CD14-positive monocyte (primary cell): ENCODE measurements at regions of chr11 and their contacts with region 1.

Region 1: GRCh38 chr11:5808500-5809121 is at the start of gene OR52N2:
- DNase-seq: peak; percentile 71 to 83 (median 80)
- H3K4me3 ChIP-seq: peak within 1 kb of the TSS; percentile 73 to 98 (median 87)
- H3K4me3 Mint-ChIP-seq: peak within 1 kb of the TSS; percentile 97 to 98
- H3K27ac ChIP-seq: peak within 1 kb of the TSS; percentile 2 to 77
- H3K27ac Mint-ChIP-seq: peak within 1 kb of the TSS; percentile 30 to 88 (median 59)
- H3K4me1 ChIP-seq: peaks cover 7 to 15% of the 10 kb centered on the region in 2 donors
- H3K4me1 Mint-ChIP-seq: peaks cover 16% of the 10 kb centered on the region
- H3K27me3 ChIP-seq: no peaks in the 10 kb centered on the region
- H3K27me3 Mint-ChIP-seq: peaks cover 0 to 5% (median 2%) of the 10 kb centered on the region in 3 donors
- CTCF ChIP-seq: peak; percentile 87
- polyA plus RNA-seq, gene OR52N2: not detected

Region 2: DNA sequence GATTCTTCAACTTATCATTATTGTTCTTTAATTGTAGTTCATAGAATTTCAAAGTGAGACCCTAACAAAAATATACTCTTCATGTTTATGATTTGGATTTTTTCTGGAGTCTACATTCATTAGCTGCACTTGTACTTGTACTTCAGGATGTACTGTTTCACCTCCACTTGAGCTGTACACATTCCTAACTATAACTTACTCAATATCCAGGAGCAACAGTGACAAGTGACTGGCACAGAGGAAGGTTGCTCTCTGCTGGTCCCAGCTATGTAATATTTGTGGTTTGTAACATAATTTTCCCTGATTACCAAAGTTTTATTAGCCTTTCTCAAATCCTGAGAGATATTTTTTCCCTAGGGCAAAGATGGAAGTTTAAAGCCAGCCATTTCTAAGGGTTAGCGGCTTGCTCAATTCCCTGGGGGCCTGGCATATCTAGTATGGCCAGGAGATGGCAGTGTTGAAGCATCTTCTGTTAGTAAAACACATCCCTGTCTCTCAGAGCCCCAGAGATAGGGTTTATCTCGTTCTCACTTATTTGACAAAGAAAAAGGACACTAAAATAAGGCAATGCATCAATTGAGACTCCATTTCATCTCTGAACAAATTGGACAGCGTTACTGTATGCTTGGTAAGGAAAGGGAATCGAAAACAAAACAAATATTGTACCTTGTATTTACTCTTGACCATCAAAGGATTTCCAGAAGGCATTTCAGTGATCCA is 684.6 kb before region 1 on chr11:
- intact Hi-C with region 1: loop called in 1 of 2 experiments (anchors 10 kb)
- DNase-seq: peak; percentile 6 to 33 (median 16)
- H3K4me3 ChIP-seq: no peak overlapping the region
- H3K4me3 Mint-ChIP-seq: no peak overlapping the region
- H3K27ac ChIP-seq: no peak overlapping the region
- H3K27ac Mint-ChIP-seq: no peak overlapping the region
- H3K4me1 ChIP-seq: no peaks in the 10 kb centered on the region
- H3K4me1 Mint-ChIP-seq: no peaks in the 10 kb centered on the region
- H3K27me3 ChIP-seq: no peaks in the 10 kb centered on the region
- H3K27me3 Mint-ChIP-seq: peaks cover 2 to 6% (median 4%) of the 10 kb centered on the region in 3 donors
- CTCF ChIP-seq: peak; percentile 84

Region 3: GRCh38 chr11:5476184-5476819 is 332.3 kb before region 1 on chr11:
- intact Hi-C with region 1: loop called (anchors 1 to 5 kb)
- DNase-seq: peak; percentile 19 to 57 (median 55)
- H3K4me3 ChIP-seq: no peak overlapping the region
- H3K4me3 Mint-ChIP-seq: no peak overlapping the region
- H3K27ac ChIP-seq: no peak overlapping the region
- H3K27ac Mint-ChIP-seq: no peak overlapping the region
- H3K4me1 ChIP-seq: no peaks in the 10 kb centered on the region
- H3K4me1 Mint-ChIP-seq: no peaks in the 10 kb centered on the region
- H3K27me3 ChIP-seq: no peaks in the 10 kb centered on the region
- H3K27me3 Mint-ChIP-seq: peaks cover 0 to 2% (median 0%) of the 10 kb centered on the region in 3 donors
- CTCF ChIP-seq: peak; percentile 88

Region 4: DNA sequence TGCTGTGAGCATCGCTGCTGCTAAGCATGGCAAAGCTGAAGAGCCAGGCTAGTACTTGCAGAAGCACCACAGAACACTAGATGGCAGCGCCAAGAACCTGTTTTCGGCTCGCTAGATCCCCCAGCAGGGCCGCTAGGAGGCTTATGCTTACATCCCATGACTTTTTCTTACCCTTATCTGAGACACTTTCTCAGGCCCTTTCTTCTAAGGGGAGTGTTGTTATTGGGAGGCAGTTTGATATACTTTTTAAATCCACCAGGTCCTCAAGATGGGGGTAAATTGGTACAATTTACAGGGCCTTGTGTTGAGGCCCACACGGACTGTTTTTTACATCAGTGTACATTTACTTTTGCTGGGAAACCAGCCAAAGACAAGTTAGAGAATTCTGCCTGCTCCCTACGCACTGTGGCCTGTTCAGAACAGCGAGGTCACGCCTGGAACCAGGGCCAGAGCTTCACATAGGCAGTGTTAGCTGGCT is 208.2 kb before region 1 on chr11:
- intact Hi-C with region 1: loop called in 1 of 2 experiments (anchors 10 kb)
- DNase-seq: peak; percentile 47 to 68 (median 59)
- H3K4me3 ChIP-seq: no peak overlapping the region
- H3K4me3 Mint-ChIP-seq: no peak overlapping the region
- H3K27ac ChIP-seq: no peak overlapping the region
- H3K27ac Mint-ChIP-seq: no peak overlapping the region
- H3K4me1 ChIP-seq: peaks cover 0 to 7% of the 10 kb centered on the region in 2 donors
- H3K4me1 Mint-ChIP-seq: peaks cover 19% of the 10 kb centered on the region
- H3K27me3 ChIP-seq: no peaks in the 10 kb centered on the region
- H3K27me3 Mint-ChIP-seq: peaks cover 0 to 2% (median 0%) of the 10 kb centered on the region in 3 donors
- CTCF ChIP-seq: peak; percentile 79

Region 5: GRCh38 chr11:5847711-5848110 is 39.1 kb after region 1 on chr11:
- intact Hi-C with region 1: no loop called
- DNase-seq: no peak
- H3K4me3 ChIP-seq: no peak overlapping the region
- H3K4me3 Mint-ChIP-seq: no peak overlapping the region
- H3K27ac ChIP-seq: no peak overlapping the region
- H3K27ac Mint-ChIP-seq: no peak overlapping the region
- H3K4me1 ChIP-seq: no peaks in the 10 kb centered on the region
- H3K4me1 Mint-ChIP-seq: no peaks in the 10 kb centered on the region
- H3K27me3 ChIP-seq: no peaks in the 10 kb centered on the region
- H3K27me3 Mint-ChIP-seq: peaks cover 0 to 2% (median 0%) of the 10 kb centered on the region in 3 donors
- CTCF ChIP-seq: no peak